MCF 10A (cell line): ENCODE measurements at regions of chr1 and their contacts with region 1.

Region 1: DNA sequence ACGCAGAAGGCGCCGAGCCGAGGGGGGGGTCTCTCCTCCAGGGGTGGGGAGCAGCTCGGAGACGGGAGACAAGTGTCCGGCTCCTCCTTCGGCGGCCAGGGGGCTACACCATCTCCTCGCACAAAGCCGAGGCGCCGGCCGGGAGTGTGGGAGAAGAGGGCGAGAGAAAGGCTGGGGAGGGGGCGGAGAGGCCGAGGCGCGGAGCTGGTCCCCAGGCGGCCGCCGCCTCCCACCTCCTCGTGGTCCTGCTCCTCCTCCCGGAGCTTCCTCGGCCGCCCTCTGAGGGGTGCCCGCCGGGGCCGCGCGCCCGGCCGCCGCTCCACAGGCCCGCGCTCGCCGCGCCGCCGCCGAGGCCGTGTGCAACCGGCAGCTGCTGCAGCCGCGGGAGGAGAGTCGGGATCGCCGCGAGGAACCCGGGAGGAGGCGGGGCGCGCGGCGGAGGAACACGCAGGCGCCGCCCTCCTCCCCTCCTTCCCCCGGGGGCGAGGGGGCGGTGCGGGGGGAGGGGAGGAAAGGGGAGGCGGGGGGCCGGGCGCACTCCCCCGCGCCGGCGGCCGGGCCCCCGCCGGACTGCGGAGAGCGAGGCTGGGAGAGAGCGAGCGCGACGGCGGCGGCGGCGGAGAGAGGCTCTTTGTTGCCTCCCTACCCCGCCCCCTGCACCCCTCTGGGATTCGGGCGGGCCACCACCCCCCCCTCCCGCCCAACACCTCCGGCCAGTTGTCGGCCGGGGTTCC is at the start of gene ENAH:
- DNase-seq: peak; percentile 93
- H3K4me3 Mint-ChIP-seq: peak within 1 kb of the TSS; percentile 99
- H3K27ac Mint-ChIP-seq: peak within 1 kb of the TSS; percentile 94
- H3K4me1 Mint-ChIP-seq: peaks cover 67% of the 10 kb centered on the region
- H3K27me3 Mint-ChIP-seq: no peaks in the 10 kb centered on the region
- CTCF ChIP-seq: no peak
- total RNA-seq, gene ENAH: 346 and 420 TPM in 2 replicates

Region 2: DNA sequence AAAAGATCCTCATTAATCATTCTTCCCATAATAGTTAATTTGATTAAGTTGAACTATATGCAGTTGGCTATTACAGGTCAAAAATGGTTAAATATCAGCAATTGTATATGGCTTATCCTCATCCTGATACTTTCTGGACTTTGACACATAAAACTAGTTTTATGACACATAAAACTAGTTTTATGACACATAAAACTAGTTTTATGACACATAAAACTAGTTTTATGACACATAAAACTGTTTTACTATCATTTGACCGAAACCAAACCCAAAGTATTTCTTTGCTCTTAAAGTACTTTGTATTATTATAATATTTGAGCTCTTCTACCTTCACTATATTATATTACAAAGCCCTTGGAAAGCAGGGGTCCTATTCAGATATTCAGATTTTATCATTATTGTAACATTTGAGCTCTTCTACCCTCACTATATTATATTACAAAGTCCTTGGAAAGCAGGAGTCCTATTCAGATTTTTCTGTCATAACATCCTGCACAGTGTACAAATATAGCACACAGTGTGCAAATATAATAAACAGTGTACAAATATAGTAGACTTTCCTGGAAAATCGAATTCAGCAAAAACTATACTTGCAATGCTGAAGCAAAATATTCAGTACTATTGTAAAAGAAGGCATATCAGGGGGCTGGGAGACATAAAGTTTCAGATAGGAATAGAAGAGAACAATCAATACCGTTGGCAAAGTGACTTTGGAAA is 1376.0 kb before region 1 on chr1:
- CTCF ChIA-PET with region 1: no interaction called
- POLR2A ChIA-PET with region 1: no interaction called
- intact Hi-C with region 1: no loop called
- DNase-seq: no peak
- H3K4me3 Mint-ChIP-seq: no peak overlapping the region
- H3K27ac Mint-ChIP-seq: no peak overlapping the region
- H3K4me1 Mint-ChIP-seq: peaks cover 5% of the 10 kb centered on the region
- H3K27me3 Mint-ChIP-seq: no peaks in the 10 kb centered on the region
- CTCF ChIP-seq: no peak

Region 3: GRCh38 chr1:224988042-224988441 is 664.9 kb before region 1 on chr1:
- CTCF ChIA-PET with region 1: no interaction called
- POLR2A ChIA-PET with region 1: no interaction called
- intact Hi-C with region 1: no loop called
- DNase-seq: no peak
- H3K4me3 Mint-ChIP-seq: no peak overlapping the region
- H3K27ac Mint-ChIP-seq: no peak overlapping the region
- H3K4me1 Mint-ChIP-seq: no peaks in the 10 kb centered on the region
- H3K27me3 Mint-ChIP-seq: no peaks in the 10 kb centered on the region
- CTCF ChIP-seq: no peak

Region 4: GRCh38 chr1:225474986-225475820 is 177.7 kb before region 1 on chr1:
- CTCF ChIA-PET with region 1: interaction called, 11 read pairs
- POLR2A ChIA-PET with region 1: interaction called, 11 read pairs
- intact Hi-C with region 1: loop called (anchors 2 kb)
- DNase-seq: peak; percentile 85
- H3K4me3 Mint-ChIP-seq: no peak overlapping the region
- H3K27ac Mint-ChIP-seq: no peak overlapping the region
- H3K4me1 Mint-ChIP-seq: no peaks in the 10 kb centered on the region
- H3K27me3 Mint-ChIP-seq: no peaks in the 10 kb centered on the region
- CTCF ChIP-seq: peak; percentile 100

Region 5: DNA sequence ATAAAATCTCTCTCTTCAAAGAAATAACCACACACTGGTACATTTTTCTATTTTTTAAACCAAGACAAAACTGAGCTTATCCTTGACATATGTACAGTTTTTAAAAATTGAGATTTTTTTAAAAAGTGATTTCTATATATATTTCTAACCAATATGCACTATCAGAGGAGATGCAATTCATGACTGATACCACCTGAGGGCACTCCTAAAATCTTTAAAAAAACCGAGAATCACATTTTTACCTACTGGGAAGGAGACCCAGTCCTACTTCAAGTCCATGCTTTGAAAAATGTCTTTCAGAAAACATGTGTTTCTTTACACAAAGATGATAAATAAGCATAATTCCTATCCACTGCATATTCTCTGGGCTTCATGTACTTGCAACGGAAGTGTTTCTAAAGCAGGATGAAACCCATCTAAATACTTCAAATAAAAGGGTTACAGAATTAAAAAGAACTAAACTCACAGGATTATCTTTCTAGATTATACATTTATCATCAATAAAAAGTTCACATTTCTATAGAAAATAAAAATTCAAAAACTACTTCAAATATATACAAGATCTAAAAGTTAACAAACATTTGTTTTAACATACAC is 98.6 kb before region 1 on chr1:
- CTCF ChIA-PET with region 1: interaction called, 17 read pairs
- POLR2A ChIA-PET with region 1: interaction called, 43 read pairs
- intact Hi-C with region 1: loop called (anchors 1 kb)
- DNase-seq: peak; percentile 67
- H3K4me3 Mint-ChIP-seq: no peak overlapping the region
- H3K27ac Mint-ChIP-seq: no peak overlapping the region
- H3K4me1 Mint-ChIP-seq: peaks cover 2% of the 10 kb centered on the region
- H3K27me3 Mint-ChIP-seq: no peaks in the 10 kb centered on the region
- CTCF ChIP-seq: peak; percentile 85

Region 6: GRCh38 chr1:225612287-225612686 is 40.6 kb before region 1 on chr1:
- CTCF ChIA-PET with region 1: interaction called, 5 read pairs
- POLR2A ChIA-PET with region 1: interaction called, 35 read pairs
- intact Hi-C with region 1: no loop called
- DNase-seq: peak; percentile 40
- H3K4me3 Mint-ChIP-seq: no peak overlapping the region
- H3K27ac Mint-ChIP-seq: peak overlapping the region; percentile 68
- H3K4me1 Mint-ChIP-seq: peaks cover 34% of the 10 kb centered on the region
- H3K27me3 Mint-ChIP-seq: no peaks in the 10 kb centered on the region
- CTCF ChIP-seq: no peak

Region 7: GRCh38 chr1:225664762-225665161 is 11.9 kb after region 1 on chr1:
- CTCF ChIA-PET with region 1: interaction called, 3 read pairs
- POLR2A ChIA-PET with region 1: interaction called, 11 read pairs
- intact Hi-C with region 1: no loop called
- DNase-seq: no peak
- H3K4me3 Mint-ChIP-seq: no peak overlapping the region
- H3K27ac Mint-ChIP-seq: no peak overlapping the region
- H3K4me1 Mint-ChIP-seq: no peaks in the 10 kb centered on the region
- H3K27me3 Mint-ChIP-seq: no peaks in the 10 kb centered on the region
- CTCF ChIP-seq: no peak

Region 8: DNA sequence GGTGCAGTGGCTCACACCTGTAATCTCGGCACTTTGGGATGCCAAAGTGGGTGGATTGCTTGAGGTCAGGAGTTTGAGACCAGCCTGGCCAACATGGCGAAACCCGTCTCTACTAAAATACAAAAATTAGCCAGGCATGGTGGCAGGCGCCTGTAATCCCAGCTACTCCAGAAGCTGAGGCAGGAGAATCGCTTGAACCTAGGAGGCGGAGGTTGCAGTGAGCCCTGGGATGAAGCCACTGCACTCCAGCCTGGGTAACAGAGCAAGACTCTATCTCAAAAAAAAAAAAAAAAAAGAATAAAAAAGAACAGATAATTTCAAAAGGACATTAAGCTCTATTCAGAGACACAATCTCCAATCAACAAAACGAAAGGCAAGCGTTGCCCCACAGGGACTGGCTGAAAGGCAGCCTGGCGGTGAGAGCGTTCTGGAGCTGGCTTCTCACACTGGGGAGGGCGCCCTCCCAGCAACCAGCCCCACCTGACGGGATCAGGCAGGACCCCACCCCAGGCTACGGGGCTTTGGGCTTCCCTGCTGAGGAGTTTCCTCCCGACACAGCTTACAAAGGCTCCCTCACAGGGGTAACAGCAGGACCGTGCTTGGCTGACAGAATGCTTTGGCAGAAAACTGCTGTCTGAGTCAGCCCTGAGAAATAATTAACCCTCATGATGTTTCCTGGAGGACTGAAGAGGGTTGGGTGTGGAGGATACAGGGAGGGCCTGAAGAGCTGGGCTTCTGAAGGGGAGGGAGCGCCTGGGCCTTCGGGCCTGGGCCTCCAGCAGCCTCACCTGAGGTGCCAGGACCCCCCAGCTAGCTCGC is 93.7 kb after region 1 on chr1:
- CTCF ChIA-PET with region 1: interaction called, 7 read pairs
- POLR2A ChIA-PET with region 1: interaction called, 27 read pairs
- intact Hi-C with region 1: no loop called
- DNase-seq: peak; percentile 98
- H3K4me3 Mint-ChIP-seq: peak overlapping the region; percentile 66
- H3K27ac Mint-ChIP-seq: peak overlapping the region; percentile 90
- H3K4me1 Mint-ChIP-seq: peaks cover 35% of the 10 kb centered on the region
- H3K27me3 Mint-ChIP-seq: no peaks in the 10 kb centered on the region
- CTCF ChIP-seq: no peak

Region 9: GRCh38 chr1:225888898-225889601 is 236.2 kb after region 1 on chr1 and contains the start of gene LEFTY1:
- CTCF ChIA-PET with region 1: no interaction called
- POLR2A ChIA-PET with region 1: no interaction called
- intact Hi-C with region 1: no loop called
- DNase-seq: no peak
- H3K4me3 Mint-ChIP-seq: no peak within 1 kb of the TSS
- H3K27ac Mint-ChIP-seq: no peak within 1 kb of the TSS
- H3K4me1 Mint-ChIP-seq: peaks cover 7% of the 10 kb centered on the region
- H3K27me3 Mint-ChIP-seq: no peaks in the 10 kb centered on the region
- CTCF ChIP-seq: no peak
- total RNA-seq, gene LEFTY1: not detected in 2 replicates

Region 10: DNA sequence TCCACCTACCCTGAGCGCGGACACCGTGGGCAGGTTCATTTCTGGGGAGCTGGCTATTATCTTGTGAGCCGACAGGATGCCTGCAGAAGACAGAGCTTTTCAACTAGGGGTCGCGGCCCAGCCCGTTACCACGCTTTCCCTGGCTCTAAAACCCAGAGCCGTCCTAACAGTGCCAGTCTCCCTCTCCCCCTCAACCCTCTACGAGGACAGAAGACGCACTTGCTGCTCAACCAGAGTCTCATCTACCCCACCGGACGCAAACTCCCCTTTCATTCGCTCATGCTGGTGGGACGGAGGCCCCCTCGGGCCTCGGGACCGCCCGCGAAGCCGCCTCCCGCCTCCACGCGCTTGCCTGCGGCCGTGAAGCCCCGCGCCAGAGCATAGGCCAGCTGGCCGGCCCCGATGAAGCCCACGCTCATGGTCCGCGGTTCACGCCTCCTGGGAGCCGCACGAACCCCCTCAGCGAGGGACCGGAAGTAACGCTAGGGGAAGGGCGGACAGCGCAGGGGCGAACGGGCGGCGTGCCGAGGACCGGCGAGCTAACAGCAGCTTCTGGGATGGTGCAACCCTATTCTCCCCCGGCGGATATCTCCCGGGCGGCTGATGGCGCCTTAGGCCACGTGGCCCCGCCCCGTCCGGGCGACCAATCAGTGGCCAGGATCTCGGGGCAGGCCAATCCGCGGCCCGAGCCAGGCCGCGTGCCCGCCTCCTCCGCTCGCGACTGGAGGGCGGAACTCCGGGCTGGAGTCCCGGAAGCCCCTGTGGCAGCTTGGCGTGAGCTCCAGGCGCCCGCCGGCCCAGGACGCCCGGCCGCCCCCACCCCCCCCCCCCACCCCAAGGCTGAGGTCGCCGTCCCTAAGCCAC is 271.0 kb after region 1 on chr1 and contains the start of gene PYCR2:
- CTCF ChIA-PET with region 1: no interaction called
- POLR2A ChIA-PET with region 1: interaction called, 12 read pairs
- intact Hi-C with region 1: no loop called
- DNase-seq: peak; percentile 99
- H3K4me3 Mint-ChIP-seq: peak within 1 kb of the TSS; percentile 99
- H3K27ac Mint-ChIP-seq: peak within 1 kb of the TSS; percentile 95
- H3K4me1 Mint-ChIP-seq: peaks cover 42% of the 10 kb centered on the region
- H3K27me3 Mint-ChIP-seq: no peaks in the 10 kb centered on the region
- CTCF ChIP-seq: no peak
- total RNA-seq, gene PYCR2: 172 and 173 TPM in 2 replicates

Region 11: DNA sequence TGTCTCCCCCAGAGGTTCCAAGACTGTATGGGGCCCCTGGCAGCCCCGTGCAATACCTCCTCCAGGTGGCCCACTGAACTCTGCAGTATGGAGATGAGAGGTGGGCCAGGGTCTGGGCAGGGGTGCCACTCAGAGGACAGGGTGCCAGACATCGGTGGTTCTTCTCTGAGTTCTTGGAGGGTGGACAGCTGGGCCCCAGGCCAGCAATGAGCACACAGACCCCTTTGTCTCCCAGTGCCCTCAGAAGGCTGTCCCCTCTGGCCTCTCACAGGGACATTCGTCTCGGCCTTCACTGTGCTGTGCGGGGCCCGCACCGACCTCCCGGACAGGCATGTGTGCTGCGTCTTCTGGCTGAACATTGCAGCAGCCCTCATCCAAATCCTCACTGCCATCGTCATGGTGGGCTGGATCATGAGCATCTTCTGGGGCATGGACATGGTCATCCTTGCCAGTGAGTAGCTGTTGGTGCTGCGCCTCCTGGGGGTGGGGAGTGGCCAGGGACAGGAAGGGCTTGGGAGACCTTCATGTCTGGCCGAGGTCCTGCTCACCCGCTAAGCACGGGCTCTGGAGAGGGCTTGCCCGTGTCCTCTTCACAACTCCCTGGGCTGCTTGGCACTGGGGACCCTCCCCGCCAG is 943.8 kb after region 1 on chr1:
- CTCF ChIA-PET with region 1: no interaction called
- POLR2A ChIA-PET with region 1: no interaction called
- intact Hi-C with region 1: no loop called
- DNase-seq: no peak
- H3K4me3 Mint-ChIP-seq: no peak overlapping the region
- H3K27ac Mint-ChIP-seq: no peak overlapping the region
- H3K4me1 Mint-ChIP-seq: peaks cover 22% of the 10 kb centered on the region
- H3K27me3 Mint-ChIP-seq: peaks cover 21% of the 10 kb centered on the region
- CTCF ChIP-seq: no peak